ENCODE measurements at regions of chr22 and their contacts with region 1.

Region 1: DNA sequence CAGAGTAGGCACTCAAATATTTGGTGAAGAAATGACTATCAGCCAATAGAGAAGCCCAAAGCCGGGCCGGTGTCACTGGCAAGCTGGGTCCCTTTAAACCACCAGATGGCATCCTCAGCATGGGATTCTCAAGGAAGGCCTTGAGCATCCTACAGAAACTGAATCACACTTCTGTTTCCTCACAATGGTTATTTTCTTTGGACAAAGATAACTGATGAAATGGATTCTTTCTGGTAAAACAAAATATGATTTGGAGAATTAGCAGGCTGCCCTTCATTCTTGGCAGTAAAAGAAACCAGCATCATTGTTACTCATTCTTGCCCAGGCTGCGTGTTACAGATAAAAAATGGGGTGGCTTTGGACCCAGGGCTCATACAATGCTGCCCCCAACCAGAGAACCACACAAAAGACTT is 30.3 kb upstream of the ASPHD2 start:
- DNase-seq: peak; percentile 58 to 71 (median 64)
- H3K4me3 ChIP-seq: no peak overlapping the region
- H3K4me3 Mint-ChIP-seq: no peak overlapping the region
- H3K27ac ChIP-seq: no peak overlapping the region
- H3K27ac Mint-ChIP-seq: peak overlapping the region in 1 of 7 donors; percentile 62
- H3K4me1 ChIP-seq: peaks cover under 1 to 4% of the 10 kb centered on the region in 2 donors
- H3K4me1 Mint-ChIP-seq: peaks cover 6% of the 10 kb centered on the region
- H3K27me3 ChIP-seq: no peaks in the 10 kb centered on the region
- H3K27me3 Mint-ChIP-seq: peaks cover 0 to 1% (median 0%) of the 10 kb centered on the region in 3 donors
- CTCF ChIP-seq: peak; percentile 85

Region 2: GRCh38 chr22:26236991-26237390 is 161.8 kb before region 1 on chr22:
- intact Hi-C with region 1: no loop called
- DNase-seq: no peak
- H3K4me3 ChIP-seq: no peak overlapping the region
- H3K4me3 Mint-ChIP-seq: no peak overlapping the region
- H3K27ac ChIP-seq: no peak overlapping the region
- H3K27ac Mint-ChIP-seq: peak overlapping the region in 1 of 7 donors; percentile 6
- H3K4me1 ChIP-seq: no peaks in the 10 kb centered on the region
- H3K4me1 Mint-ChIP-seq: no peaks in the 10 kb centered on the region
- H3K27me3 ChIP-seq: no peaks in the 10 kb centered on the region
- H3K27me3 Mint-ChIP-seq: peaks cover 3 to 6% (median 4%) of the 10 kb centered on the region in 3 donors
- CTCF ChIP-seq: no peak

Region 3: DNA sequence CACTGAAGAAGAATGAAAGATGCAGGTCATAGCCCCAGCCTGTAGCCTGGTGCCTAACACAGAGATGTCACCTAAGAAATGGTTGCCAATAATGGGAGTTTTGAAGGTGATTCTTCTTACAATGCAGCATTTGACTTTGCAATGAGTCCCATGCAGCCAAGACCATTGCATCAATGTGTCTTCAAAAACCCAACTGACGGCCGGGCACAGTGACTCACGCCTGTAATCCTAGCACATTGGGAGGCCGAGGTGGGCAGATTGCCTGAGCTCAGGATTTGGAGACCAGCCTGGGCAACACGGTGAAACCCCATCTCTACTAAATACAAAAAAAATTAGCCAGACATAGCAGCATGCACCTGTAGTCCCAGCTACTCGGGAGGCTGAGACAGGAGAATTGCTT is 59.0 kb before region 1 on chr22:
- intact Hi-C with region 1: no loop called
- DNase-seq: no peak
- H3K4me3 ChIP-seq: no peak overlapping the region
- H3K4me3 Mint-ChIP-seq: no peak overlapping the region
- H3K27ac ChIP-seq: no peak overlapping the region
- H3K27ac Mint-ChIP-seq: no peak overlapping the region
- H3K4me1 ChIP-seq: no peaks in the 10 kb centered on the region
- H3K4me1 Mint-ChIP-seq: no peaks in the 10 kb centered on the region
- H3K27me3 ChIP-seq: peaks cover 0 to 2% of the 10 kb centered on the region in 2 donors
- H3K27me3 Mint-ChIP-seq: peaks cover 0 to 12% (median 4%) of the 10 kb centered on the region in 3 donors
- CTCF ChIP-seq: no peak

Region 4: GRCh38 chr22:26461188-26461810 is 62.6 kb after region 1 on chr22:
- intact Hi-C with region 1: loop called (anchors 1 to 2 kb)
- DNase-seq: peak in 2 of 3 donors; percentile 44 to 55
- H3K4me3 ChIP-seq: no peak overlapping the region
- H3K4me3 Mint-ChIP-seq: no peak overlapping the region
- H3K27ac ChIP-seq: no peak overlapping the region
- H3K27ac Mint-ChIP-seq: no peak overlapping the region
- H3K4me1 ChIP-seq: no peaks in the 10 kb centered on the region
- H3K4me1 Mint-ChIP-seq: peaks cover 7% of the 10 kb centered on the region
- H3K27me3 ChIP-seq: no peaks in the 10 kb centered on the region
- H3K27me3 Mint-ChIP-seq: peaks cover 0 to 3% (median 0%) of the 10 kb centered on the region in 3 donors
- CTCF ChIP-seq: peak; percentile 85

Region 5: DNA sequence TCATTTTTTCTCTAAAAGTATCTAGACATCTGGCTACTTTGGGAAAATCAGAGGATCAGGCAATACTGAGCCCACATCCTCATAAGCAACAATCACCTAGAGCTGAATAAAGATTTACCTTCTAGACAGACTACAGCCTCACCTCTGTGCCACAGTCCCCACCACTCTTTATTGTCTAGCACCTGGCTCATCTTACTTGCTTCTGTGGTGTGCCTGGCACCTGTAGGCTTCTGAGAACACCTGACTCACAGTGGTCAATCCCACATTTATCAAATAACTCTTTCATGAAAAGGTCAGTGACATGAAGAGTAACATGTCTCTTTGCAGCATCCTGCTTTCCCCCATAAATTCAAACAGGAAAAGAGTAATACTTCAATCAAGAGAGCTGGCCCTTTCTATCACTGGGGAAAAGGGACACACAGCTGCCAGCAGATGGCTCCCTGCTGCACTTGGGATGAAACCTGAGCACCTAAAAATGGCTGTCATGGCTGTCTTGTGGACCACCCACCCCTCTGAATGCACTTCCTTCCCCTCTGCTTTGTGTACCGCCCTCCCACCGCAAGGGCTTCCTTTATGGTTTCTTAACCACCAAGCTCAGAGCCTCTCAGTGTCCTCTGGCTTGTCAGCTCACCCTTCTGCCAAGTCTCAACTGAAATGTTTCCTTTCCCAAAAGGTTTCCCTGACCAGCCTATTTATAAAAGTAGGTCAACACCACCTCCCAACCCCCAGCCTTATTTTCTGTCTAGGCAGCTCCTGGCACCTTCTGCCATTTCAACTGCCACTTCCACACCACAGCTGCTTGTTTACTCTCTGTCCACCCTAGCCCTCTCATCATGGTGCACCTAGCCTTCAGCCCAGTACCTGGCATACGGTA is 104.2 kb after region 1 on chr22:
- intact Hi-C with region 1: no loop called
- DNase-seq: peak; percentile 9 to 29 (median 23)
- H3K4me3 ChIP-seq: no peak overlapping the region
- H3K4me3 Mint-ChIP-seq: peak overlapping the region in 1 of 2 donors; percentile 37
- H3K27ac ChIP-seq: peak overlapping the region in 1 of 2 donors; percentile 52
- H3K27ac Mint-ChIP-seq: peak overlapping the region; percentile 64 to 89 (median 81)
- H3K4me1 ChIP-seq: peaks cover 9 to 12% of the 10 kb centered on the region in 2 donors
- H3K4me1 Mint-ChIP-seq: peaks cover 15% of the 10 kb centered on the region
- H3K27me3 ChIP-seq: no peaks in the 10 kb centered on the region
- H3K27me3 Mint-ChIP-seq: peaks cover 0 to 9% (median 0%) of the 10 kb centered on the region in 3 donors
- CTCF ChIP-seq: peak; percentile 52

Region 6: GRCh38 chr22:26658671-26659478 is 260.1 kb after region 1 on chr22:
- intact Hi-C with region 1: loop called in 1 of 2 experiments (anchors 10 kb)
- DNase-seq: peak; percentile 64 to 86 (median 73)
- H3K4me3 ChIP-seq: peak overlapping the region in 2 of 3 experiments; percentile 10 to 68
- H3K4me3 Mint-ChIP-seq: peak overlapping the region; percentile 83 to 93
- H3K27ac ChIP-seq: no peak overlapping the region
- H3K27ac Mint-ChIP-seq: peak overlapping the region in 4 of 7 donors; percentile 26 to 72 (median 68)
- H3K4me1 ChIP-seq: peaks cover 27 to 35% of the 10 kb centered on the region in 2 donors
- H3K4me1 Mint-ChIP-seq: peaks cover 37% of the 10 kb centered on the region
- H3K27me3 ChIP-seq: peaks cover 18 to 28% of the 10 kb centered on the region in 2 donors
- H3K27me3 Mint-ChIP-seq: peaks cover 35 to 43% (median 40%) of the 10 kb centered on the region in 3 donors
- CTCF ChIP-seq: no peak